ENCODE measurements at regions of chr20 and their contacts with region 1.

Region 1: GRCh38 chr20:19265632-19266373 is 53.4 kb downstream of the SLC24A3 start:
- DNase-seq: no peak
- H3K4me3 ChIP-seq: no peak overlapping the region
- H3K27ac ChIP-seq: no peak overlapping the region
- H3K4me1 ChIP-seq: no peaks in the 10 kb centered on the region
- H3K27me3 ChIP-seq: no peaks in the 10 kb centered on the region
- CTCF ChIP-seq: no peak
- EP300 ChIP-seq: no peak
- POLR2A ChIP-seq: no peak

Region 2: GRCh38 chr20:19231359-19232035 is 34.3 kb before region 1 on chr20:
- in situ Hi-C with region 1: no loop called
- intact Hi-C with region 1: loop called (anchors 1 kb)
- DNase-seq: no peak
- H3K4me3 ChIP-seq: no peak overlapping the region
- H3K27ac ChIP-seq: peak overlapping the region in 3 of 4 donors; percentile 43 to 67 (median 52)
- H3K4me1 ChIP-seq: peaks cover 0 to 14% (median 0%) of the 10 kb centered on the region in 4 donors
- H3K27me3 ChIP-seq: no peaks in the 10 kb centered on the region
- CTCF ChIP-seq: no peak
- EP300 ChIP-seq: no peak
- POLR2A ChIP-seq: no peak

Measured in transverse colon (tissue), 4 donors.